Psoas muscle (tissue), 8 donors: ENCODE measurements at regions of chr12 and their contacts with region 1.

Region 1: DNA sequence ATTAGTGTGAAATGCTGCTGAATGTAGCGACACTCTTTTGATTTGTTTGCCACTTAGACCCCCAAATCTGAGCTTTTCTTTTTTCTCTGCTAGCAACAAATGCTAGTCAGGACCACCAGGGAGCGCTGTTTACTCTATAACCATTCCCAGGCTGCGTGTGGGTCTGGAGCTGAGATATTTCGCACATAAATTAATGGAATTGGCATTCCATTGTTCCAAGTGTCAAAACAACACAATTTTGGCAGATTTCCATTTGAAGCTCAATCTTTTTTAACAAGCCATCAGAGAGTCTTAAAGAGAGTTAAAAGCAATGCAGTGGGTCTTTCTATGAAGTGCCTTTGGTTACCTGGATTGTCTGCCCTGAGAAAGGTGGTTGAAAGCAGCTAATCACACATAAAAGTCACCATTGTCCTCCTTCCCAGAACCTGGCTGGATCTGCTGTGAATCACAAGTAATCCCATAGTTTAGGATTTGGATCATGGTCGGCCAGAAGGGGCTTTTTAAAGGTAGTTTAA is 7.4 kb upstream of the TMEM132C start:
- DNase-seq: no peak
- ATAC-seq: no peak
- H3K4me3 ChIP-seq: no peak overlapping the region
- H3K27ac ChIP-seq: no peak overlapping the region
- H3K4me1 ChIP-seq: no peaks in the 10 kb centered on the region
- H3K27me3 ChIP-seq: peaks cover 0 to 6% (median 0%) of the 10 kb centered on the region in 3 donors
- CTCF ChIP-seq: peak; percentile 38

Region 2: DNA sequence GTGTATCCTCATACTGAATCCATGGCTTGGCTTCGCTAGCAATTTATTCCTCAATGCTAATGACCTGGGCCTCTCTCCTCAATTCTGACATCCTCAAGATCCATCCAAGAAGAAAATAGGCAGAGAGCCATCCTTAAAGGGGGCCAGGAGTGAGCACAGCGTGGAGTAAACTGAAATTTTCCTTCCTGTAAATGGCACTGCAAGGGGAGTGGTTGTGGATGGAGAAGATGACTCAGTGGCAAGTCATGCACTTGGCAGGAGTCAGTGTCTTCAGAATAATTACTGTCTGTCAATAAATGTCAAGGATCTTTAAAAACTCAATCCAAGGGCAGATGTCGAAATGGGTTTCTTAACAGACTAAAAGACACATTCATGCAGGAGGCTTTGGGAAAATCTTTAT is 80.6 kb before region 1 on chr12:
- intact Hi-C with region 1: no loop called
- DNase-seq: no peak
- ATAC-seq: no peak
- H3K4me3 ChIP-seq: no peak overlapping the region
- H3K27ac ChIP-seq: no peak overlapping the region
- H3K4me1 ChIP-seq: no peaks in the 10 kb centered on the region
- H3K27me3 ChIP-seq: no peaks in the 10 kb centered on the region
- CTCF ChIP-seq: no peak

Region 3: DNA sequence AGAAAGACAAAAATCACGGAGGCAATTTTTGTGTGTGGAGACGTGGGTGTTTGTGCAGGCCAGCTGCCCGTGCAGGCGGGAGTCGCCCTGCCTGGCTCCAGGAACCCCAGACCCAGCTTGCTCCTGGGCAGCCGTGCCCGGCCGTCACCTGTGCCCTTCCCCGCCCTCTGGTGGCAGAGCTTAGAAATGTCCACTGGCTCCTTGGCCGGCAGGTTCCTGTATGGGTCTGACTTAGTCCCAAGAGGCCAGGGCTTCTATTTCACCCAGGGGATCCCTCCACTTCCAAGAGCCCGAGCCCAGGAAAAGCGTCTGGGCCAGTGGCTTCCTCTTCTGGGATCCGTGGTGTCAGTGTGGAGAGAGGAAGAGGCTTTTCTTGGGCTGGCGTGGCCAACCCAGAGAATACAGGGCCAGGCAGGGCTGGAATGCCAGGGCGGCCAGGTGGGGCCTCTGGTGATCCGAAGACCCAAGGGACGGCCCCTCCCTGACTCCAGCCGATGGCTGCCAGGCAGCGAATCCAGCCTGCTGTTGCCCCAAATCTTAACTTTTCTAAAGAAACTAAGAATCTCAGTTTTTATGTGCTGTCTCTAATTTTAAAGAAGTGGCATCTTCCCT is 128.3 kb after region 1 on chr12:
- intact Hi-C with region 1: loop called in 1 of 2 experiments (anchors 10 kb)
- DNase-seq: peak; percentile 29 to 63
- ATAC-seq: peak in 1 of 4 donors; percentile 54
- H3K4me3 ChIP-seq: no peak overlapping the region
- H3K27ac ChIP-seq: no peak overlapping the region
- H3K4me1 ChIP-seq: no peaks in the 10 kb centered on the region
- H3K27me3 ChIP-seq: peaks cover 0 to 4% (median 0%) of the 10 kb centered on the region in 3 donors
- CTCF ChIP-seq: peak; percentile 23

Region 4: GRCh38 chr12:128459067-128459466 is 199.5 kb after region 1 on chr12:
- intact Hi-C with region 1: no loop called
- DNase-seq: no peak
- ATAC-seq: no peak
- H3K4me3 ChIP-seq: no peak overlapping the region
- H3K27ac ChIP-seq: no peak overlapping the region
- H3K4me1 ChIP-seq: no peaks in the 10 kb centered on the region
- H3K27me3 ChIP-seq: no peaks in the 10 kb centered on the region
- CTCF ChIP-seq: no peak